IMR-90 (cell line): ENCODE measurements at regions of chrX and their contacts with region 1.

Region 1: GRCh38 chrX:45515262-45516215 is 314.9 kb upstream of the DIPK2B start:
- DNase-seq: peak; percentile 92
- ATAC-seq: peak; percentile 71
- H3K4me3 ChIP-seq: peak overlapping the region; percentile 23; the same call in 1 of the 2 replicates
- H3K27ac ChIP-seq: peak overlapping the region; percentile 77
- H3K4me1 ChIP-seq: peaks cover 7% of the 10 kb centered on the region
- H3K27me3 ChIP-seq: peaks cover 2% of the 10 kb centered on the region
- CTCF ChIP-seq: peak; percentile 74
- POLR2A ChIP-seq: peak; percentile 49; the same call in 1 of the 2 replicates
- RAD21 ChIP-seq: peak; percentile 83

Region 2: GRCh38 chrX:45596188-45596808 is 80.8 kb after region 1 on chrX:
- CTCF ChIA-PET with region 1: no interaction called
- POLR2A ChIA-PET with region 1: no interaction called
- dilution Hi-C with region 1: no loop called
- in situ Hi-C with region 1: no loop called
- intact Hi-C with region 1: loop called (anchors 5 kb)
- DNase-seq: peak; percentile 3
- ATAC-seq: no peak; the same call in 1 of the 2 replicates
- H3K4me3 ChIP-seq: no peak overlapping the region
- H3K27ac ChIP-seq: no peak overlapping the region
- H3K4me1 ChIP-seq: no peaks in the 10 kb centered on the region
- H3K27me3 ChIP-seq: peaks cover 2% of the 10 kb centered on the region; the same call in 1 of the 2 replicates
- CTCF ChIP-seq: 0 out of 2 replicates have a peak, but pooled peaks have one; percentile 8
- POLR2A ChIP-seq: no peak
- RAD21 ChIP-seq: no peak

Region 3: GRCh38 chrX:45668686-45669443 is 153.3 kb after region 1 on chrX:
- CTCF ChIA-PET with region 1: no interaction called
- POLR2A ChIA-PET with region 1: no interaction called
- dilution Hi-C with region 1: no loop called
- in situ Hi-C with region 1: no loop called
- intact Hi-C with region 1: loop called (anchors 2 kb)
- DNase-seq: peak; percentile 95
- ATAC-seq: peak; percentile 85
- H3K4me3 ChIP-seq: no peak overlapping the region
- H3K27ac ChIP-seq: no peak overlapping the region; the same call in 1 of the 2 replicates
- H3K4me1 ChIP-seq: no peaks in the 10 kb centered on the region; the same call in 1 of the 2 replicates
- H3K27me3 ChIP-seq: no peaks in the 10 kb centered on the region; the same call in 1 of the 2 replicates
- CTCF ChIP-seq: no peak
- POLR2A ChIP-seq: no peak
- RAD21 ChIP-seq: no peak; the same call in none of the 2 replicates

Region 4: DNA sequence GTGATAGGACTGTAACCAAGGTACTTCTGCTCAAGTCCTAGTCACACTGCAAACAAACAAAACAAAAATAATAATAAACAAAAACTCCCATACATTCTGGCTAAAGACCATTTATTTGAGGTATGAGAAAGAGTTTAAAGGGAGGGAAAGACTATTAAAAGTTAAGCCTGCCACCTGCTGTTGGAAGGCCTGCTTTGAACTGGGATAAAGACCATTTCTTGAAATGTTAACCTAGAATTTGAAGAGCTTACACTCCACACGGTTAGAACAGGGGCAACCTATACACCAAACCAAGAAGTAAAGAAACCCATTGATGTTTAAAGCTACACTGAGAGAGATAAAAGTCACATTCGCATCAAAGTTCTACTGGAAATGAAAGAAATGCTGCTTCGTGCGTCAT is 233.8 kb after region 1 on chrX:
- CTCF ChIA-PET with region 1: no interaction called
- POLR2A ChIA-PET with region 1: no interaction called
- dilution Hi-C with region 1: no loop called
- in situ Hi-C with region 1: loop called (anchors 10 kb)
- intact Hi-C with region 1: loop called (anchors 1 kb)
- DNase-seq: no peak
- ATAC-seq: no peak
- H3K4me3 ChIP-seq: no peak overlapping the region
- H3K27ac ChIP-seq: no peak overlapping the region
- H3K4me1 ChIP-seq: peaks cover 8% of the 10 kb centered on the region
- H3K27me3 ChIP-seq: no peaks in the 10 kb centered on the region
- CTCF ChIP-seq: peak; percentile 44
- POLR2A ChIP-seq: no peak
- RAD21 ChIP-seq: peak; percentile 51

Region 5: DNA sequence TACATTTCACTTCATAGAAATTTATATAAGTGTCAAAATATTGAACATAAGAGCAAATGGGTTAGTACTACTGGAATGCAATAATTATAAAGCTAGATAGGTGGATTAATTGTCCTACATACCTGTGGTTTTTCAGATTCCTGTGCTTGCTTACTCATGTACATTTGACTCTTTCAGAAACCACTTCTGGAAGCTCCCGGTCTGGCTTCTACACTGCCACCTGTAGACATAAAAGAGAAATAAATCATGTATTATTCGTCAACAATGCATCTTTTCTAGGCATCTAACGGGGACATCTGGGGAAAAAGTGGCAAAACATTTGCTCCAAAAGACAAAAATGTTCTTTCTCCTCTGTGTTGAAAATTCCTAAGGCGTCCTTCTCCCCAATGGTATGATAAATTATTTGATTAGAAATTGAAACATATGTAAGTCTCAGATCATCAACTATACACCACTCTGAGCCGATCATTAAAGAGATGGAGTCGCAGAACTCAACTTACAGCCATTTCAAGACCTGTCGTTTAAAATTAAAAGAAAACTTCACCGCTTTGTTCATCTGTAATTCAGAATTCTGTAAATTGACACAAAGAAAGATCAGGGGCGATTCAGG is 333.8 kb after region 1 on chrX:
- CTCF ChIA-PET with region 1: no interaction called
- POLR2A ChIA-PET with region 1: no interaction called
- dilution Hi-C with region 1: no loop called
- in situ Hi-C with region 1: loop called (anchors 10 kb)
- intact Hi-C with region 1: loop called (anchors 2 kb)
- DNase-seq: peak; percentile 86
- ATAC-seq: peak; percentile 33
- H3K4me3 ChIP-seq: peak overlapping the region; percentile 90
- H3K27ac ChIP-seq: peak overlapping the region; percentile 15; the same call in 1 of the 2 replicates
- H3K4me1 ChIP-seq: peaks cover 2% of the 10 kb centered on the region; the same call in 1 of the 2 replicates
- H3K27me3 ChIP-seq: no peaks in the 10 kb centered on the region
- CTCF ChIP-seq: peak; percentile 46
- POLR2A ChIP-seq: no peak
- RAD21 ChIP-seq: peak; percentile 28

Region 6: GRCh38 chrX:46408553-46409407 is 893.2 kb after region 1 on chrX:
- CTCF ChIA-PET with region 1: interaction called, 3 read pairs
- POLR2A ChIA-PET with region 1: no interaction called
- dilution Hi-C with region 1: no loop called
- in situ Hi-C with region 1: loop called (anchors 10 kb)
- intact Hi-C with region 1: loop called (anchors 1 kb)
- DNase-seq: peak; percentile 76
- ATAC-seq: peak; percentile 83
- H3K4me3 ChIP-seq: no peak overlapping the region
- H3K27ac ChIP-seq: no peak overlapping the region
- H3K4me1 ChIP-seq: no peaks in the 10 kb centered on the region
- H3K27me3 ChIP-seq: peaks cover 2% of the 10 kb centered on the region; the same call in 1 of the 2 replicates
- CTCF ChIP-seq: peak; percentile 94
- POLR2A ChIP-seq: no peak
- RAD21 ChIP-seq: peak; percentile 92